GM10248 (cell line): ENCODE measurements at regions of chr2 and their contacts with region 1.

Region 1: GRCh38 chr2:42810121-42810970 is 18.0 kb upstream of the HAAO start:
- DNase-seq: peak; percentile 92
- CTCF ChIP-seq: peak; percentile 5

Region 2: GRCh38 chr2:42792583-42793333 is 17.6 kb before region 1 on chr2 and contains the start of gene HAAO:
- CTCF ChIA-PET with region 1: interaction called, 59 read pairs
- POLR2A ChIA-PET with region 1: interaction called, 29 read pairs
- DNase-seq: peak; percentile 69
- CTCF ChIP-seq: peak; percentile 16

Region 3: DNA sequence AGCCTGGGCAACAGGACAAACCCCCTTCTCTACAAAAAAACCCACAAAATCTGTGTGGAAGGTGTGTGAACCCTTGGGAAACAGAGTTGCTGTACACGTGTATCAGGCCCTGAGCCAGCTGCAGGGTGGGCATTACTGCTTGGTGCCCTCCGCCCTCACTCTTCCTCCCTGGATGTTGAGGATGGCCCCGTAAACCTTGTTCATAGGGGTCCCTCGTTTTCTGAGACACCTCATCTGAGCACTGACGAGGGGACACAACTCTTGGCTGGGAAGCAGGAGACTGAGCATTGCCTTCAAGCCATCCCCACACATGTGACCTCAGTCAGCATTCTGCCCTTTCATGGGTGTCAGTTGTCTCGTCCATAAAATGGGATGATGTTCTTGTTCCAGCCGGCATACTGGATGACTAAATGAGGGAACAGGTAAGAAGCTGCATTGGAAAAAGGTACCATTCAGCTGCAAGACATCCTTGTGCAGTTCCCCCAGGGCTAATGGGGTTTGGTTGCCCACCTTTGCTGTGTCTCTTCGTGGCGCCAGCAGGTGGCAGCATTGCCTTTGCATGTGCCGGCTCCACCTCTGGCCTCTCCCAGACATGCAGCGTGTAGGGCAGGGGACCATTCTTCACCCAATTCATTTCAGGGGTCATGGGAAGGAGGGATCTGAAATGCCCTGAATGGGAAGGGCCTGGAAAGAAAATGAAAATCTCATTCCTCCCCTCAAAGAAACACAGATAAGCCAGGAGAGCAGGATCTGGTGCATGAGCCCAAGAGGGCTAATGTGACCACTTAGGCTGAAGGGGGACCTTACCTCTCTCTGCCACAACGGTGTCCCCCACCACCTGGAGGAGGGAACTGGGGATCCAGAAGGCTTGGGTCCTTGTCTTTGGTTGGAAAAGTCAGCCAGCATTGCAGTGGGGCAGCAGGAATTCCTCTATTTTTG is 18.4 kb after region 1 on chr2:
- CTCF ChIA-PET with region 1: interaction called, 64 read pairs
- POLR2A ChIA-PET with region 1: no interaction called
- DNase-seq: peak; percentile 88
- CTCF ChIP-seq: peak; percentile 76